ENCODE measurements at regions of chr19 and their contacts with region 1.

Region 1: GRCh38 chr19:30682999-30683536 is 310.9 kb downstream of the ZNF536 start:
- DNase-seq: peak; percentile 59
- H3K4me3 ChIP-seq: no peak overlapping the region
- H3K27ac ChIP-seq: no peak overlapping the region
- H3K4me1 ChIP-seq: no peaks in the 10 kb centered on the region
- H3K27me3 ChIP-seq: no peaks in the 10 kb centered on the region
- CTCF ChIP-seq: peak; percentile 76 to 92 (median 82)
- POLR2A ChIP-seq: no peak

Region 2: GRCh38 chr19:30479292-30479958 is 203.6 kb before region 1 on chr19:
- intact Hi-C with region 1: no loop called
- DNase-seq: no peak
- H3K4me3 ChIP-seq: no peak overlapping the region
- H3K27ac ChIP-seq: no peak overlapping the region
- H3K4me1 ChIP-seq: no peaks in the 10 kb centered on the region
- H3K27me3 ChIP-seq: no peaks in the 10 kb centered on the region
- CTCF ChIP-seq: no peak
- POLR2A ChIP-seq: no peak

Region 3: DNA sequence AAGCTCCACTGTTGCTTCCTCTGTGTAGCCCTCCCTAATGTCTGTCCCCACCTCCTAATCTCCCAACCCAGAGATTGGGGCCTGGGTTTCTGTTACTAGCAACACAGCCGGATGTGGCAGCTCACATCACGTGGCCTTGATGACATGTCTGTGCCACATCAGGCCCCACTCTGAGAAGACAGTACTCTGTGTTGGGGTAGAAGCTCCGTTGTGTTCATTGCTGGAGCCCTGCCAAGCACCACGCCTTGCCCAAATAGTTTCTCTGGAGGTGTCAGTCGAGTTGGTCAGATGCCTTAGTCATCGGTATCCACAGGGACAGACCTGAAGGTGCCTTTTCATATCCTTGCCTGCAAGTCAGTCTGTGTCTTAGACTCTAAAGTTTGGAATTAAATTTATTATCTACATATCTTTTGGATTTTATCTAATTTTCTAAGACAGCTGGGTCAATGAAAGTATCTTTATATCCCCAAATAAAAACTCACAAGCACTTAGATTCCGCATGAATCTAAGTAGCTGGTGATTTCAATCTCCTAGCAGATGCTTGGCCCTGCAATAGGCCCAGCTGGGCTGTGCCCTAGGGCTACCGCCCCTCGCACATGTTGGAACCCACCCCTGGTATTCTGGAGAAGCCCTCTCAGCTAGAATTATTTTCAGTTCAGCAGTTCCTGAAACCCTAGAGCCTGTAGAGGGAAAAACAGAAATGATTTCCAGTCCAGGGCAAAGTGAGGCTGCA is 870.2 kb after region 1 on chr19:
- intact Hi-C with region 1: loop called (anchors 10 kb)
- DNase-seq: no peak
- H3K4me3 ChIP-seq: no peak overlapping the region
- H3K27ac ChIP-seq: no peak overlapping the region
- H3K4me1 ChIP-seq: peaks cover 13% of the 10 kb centered on the region
- H3K27me3 ChIP-seq: no peaks in the 10 kb centered on the region
- CTCF ChIP-seq: no peak
- POLR2A ChIP-seq: no peak

Region 4: GRCh38 chr19:32041681-32042292 is 1358.7 kb after region 1 on chr19:
- intact Hi-C with region 1: loop called (anchors 5 kb)
- DNase-seq: peak; percentile 52
- H3K4me3 ChIP-seq: peak overlapping the region; percentile 21 to 23
- H3K27ac ChIP-seq: peak overlapping the region in 1 of 2 donors; percentile 18
- H3K4me1 ChIP-seq: no peaks in the 10 kb centered on the region
- H3K27me3 ChIP-seq: no peaks in the 10 kb centered on the region
- CTCF ChIP-seq: peak; percentile 51 to 77 (median 70)
- POLR2A ChIP-seq: no peak

Region 5: GRCh38 chr19:32224371-32225244 is 1541.5 kb after region 1 on chr19:
- intact Hi-C with region 1: loop called (anchors 5 kb)
- DNase-seq: peak; percentile 23
- H3K4me3 ChIP-seq: no peak overlapping the region
- H3K27ac ChIP-seq: no peak overlapping the region
- H3K4me1 ChIP-seq: peaks cover 5% of the 10 kb centered on the region
- H3K27me3 ChIP-seq: no peaks in the 10 kb centered on the region
- CTCF ChIP-seq: peak; percentile 96 to 100 (median 98)
- POLR2A ChIP-seq: no peak

Measured in prostate gland (tissue), 2 donors.